Left ventricle myocardium inferior (tissue), 1 donor: ENCODE measurements at regions of chrX and their contacts with region 1.

Region 1: DNA sequence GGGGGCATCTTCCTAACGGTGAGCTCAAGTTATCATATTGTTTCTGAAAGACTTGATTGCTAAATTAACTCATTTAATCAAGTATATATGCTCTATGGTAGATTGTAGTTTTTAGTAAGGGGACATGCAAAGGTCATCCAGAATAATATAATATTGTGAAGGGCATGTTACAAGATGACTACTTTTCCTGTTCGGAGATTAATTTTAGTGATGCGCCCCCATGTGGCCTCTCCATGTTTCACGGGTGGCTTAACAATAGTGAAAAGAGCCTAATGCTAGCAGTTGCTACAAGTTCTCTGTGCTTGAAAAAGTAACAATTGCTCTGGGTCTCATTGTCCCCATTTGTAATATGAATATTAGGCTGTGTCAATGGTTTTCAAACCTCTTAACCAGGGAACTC is 12.2 kb downstream of the SMPX start:
- DNase-seq: no peak
- H3K4me3 ChIP-seq: no peak overlapping the region
- H3K27ac ChIP-seq: no peak overlapping the region
- H3K4me1 ChIP-seq: peaks cover 50% of the 10 kb centered on the region
- H3K27me3 ChIP-seq: no peaks in the 10 kb centered on the region
- CTCF ChIP-seq: peak; percentile 59

Region 2: DNA sequence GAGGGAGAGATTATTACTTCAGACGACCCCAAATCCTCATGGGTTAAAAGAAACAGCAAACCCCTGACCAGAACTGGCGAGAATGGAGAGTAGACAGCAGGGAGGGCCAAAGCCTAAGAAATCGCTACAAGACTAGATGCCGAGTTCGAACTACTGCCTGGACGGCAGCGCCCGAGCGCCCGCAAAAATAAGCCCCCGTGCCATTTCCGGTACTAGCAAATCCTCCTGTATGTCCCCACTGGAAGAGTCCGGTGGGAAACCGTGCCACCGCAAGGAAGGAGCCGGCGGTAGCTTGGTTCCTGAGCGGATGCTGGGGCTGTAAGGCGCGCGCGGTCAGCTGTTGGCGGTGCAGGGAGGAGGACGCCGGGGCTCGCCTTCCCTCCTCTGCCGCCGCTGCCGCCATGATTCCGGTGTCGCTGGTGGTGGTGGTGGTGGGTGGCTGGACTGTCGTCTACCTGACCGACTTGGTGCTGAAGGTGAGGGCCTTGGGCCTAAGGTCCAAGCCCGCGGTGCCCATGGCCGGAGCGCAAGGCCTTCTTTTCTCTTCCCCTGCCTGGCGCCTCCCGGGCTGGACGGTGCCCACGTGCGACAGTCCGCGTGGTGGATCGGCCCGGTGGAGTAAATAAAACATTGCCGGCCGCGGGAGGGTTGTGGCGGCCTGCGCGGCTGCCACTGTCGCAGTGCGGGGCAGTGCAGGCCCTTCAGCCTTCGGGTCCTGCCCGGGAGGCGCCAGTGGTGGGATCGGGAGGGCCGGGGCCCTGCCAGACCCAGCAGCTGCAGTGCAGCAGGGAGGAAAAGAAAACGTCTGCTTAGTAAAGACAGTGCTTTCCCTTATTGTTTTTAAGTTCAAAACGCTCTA is 93.8 kb after region 1 on chrX and contains the start of gene MBTPS2:
- intact Hi-C with region 1: loop called (anchors 10 kb)
- DNase-seq: peak; percentile 80
- H3K4me3 ChIP-seq: peak within 1 kb of the TSS; percentile 80
- H3K27ac ChIP-seq: peak within 1 kb of the TSS; percentile 87
- H3K4me1 ChIP-seq: peaks cover 14% of the 10 kb centered on the region
- H3K27me3 ChIP-seq: no peaks in the 10 kb centered on the region
- CTCF ChIP-seq: no peak
- total RNA-seq, gene MBTPS2: 9.4 TPM